Gastrocnemius medialis (tissue), 4 donors: ENCODE measurements at regions of chr4 and their contacts with region 1.

Region 1: DNA sequence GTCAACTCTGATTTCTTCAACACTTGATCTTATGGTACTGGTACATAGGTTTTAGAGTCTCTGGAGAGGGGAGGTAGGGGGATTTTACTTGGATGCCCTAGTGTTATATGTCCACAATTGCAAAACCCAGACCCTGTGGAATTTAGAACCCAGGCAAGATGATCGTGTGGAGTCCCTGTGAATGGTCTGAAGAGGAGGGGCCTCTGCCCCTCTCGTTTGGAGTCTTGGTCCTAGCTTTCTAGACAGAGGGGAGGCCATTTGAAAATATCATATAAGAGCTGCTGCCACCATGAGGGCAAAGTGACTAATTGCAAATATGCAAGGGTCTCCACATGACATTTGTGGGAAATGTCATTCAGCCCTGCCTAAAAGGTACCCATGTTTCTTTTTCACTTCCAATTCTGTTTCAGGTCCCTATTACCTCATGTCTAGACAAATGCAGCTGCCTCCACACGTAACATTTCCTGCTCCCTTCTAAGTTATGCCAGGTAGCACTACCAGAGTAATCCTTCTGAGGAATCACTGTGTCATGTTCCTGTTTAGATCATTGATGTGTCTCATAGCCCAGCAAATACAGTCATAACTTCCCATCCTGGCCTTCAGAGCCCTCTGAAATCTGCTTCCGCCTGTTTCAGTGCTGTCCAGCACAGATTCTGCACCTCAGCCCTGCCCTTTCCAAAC is 126.8 kb downstream of the KLHL8 start:
- DNase-seq: no peak
- ATAC-seq: peak; percentile 73 to 74
- H3K4me3 ChIP-seq: no peak overlapping the region
- H3K27ac ChIP-seq: peak overlapping the region; percentile 72 to 80 (median 78)
- H3K4me1 ChIP-seq: peaks cover 33 to 39% of the 10 kb centered on the region in 2 donors
- H3K27me3 ChIP-seq: no peaks in the 10 kb centered on the region
- CTCF ChIP-seq: peak; percentile 43 to 60 (median 58)
- POLR2A ChIP-seq: no peak

Region 2: GRCh38 chr4:86921608-86922252 is 171.9 kb before region 1 on chr4:
- in situ Hi-C with region 1: loop called (anchors 5 to 10 kb)
- intact Hi-C with region 1: loop called (anchors 1 kb)
- DNase-seq: no peak
- ATAC-seq: peak; percentile 45 to 71
- H3K4me3 ChIP-seq: no peak overlapping the region
- H3K27ac ChIP-seq: peak overlapping the region in 2 of 4 donors; percentile 11 to 12
- H3K4me1 ChIP-seq: peaks cover 11 to 23% of the 10 kb centered on the region in 2 donors
- H3K27me3 ChIP-seq: no peaks in the 10 kb centered on the region
- CTCF ChIP-seq: no peak
- POLR2A ChIP-seq: no peak

Region 3: GRCh38 chr4:86927843-86928395 is 165.7 kb before region 1 on chr4:
- in situ Hi-C with region 1: loop called (anchors 5 to 10 kb)
- intact Hi-C with region 1: no loop called
- DNase-seq: peak; percentile 84 to 86
- ATAC-seq: peak; percentile 95 to 96
- H3K4me3 ChIP-seq: no peak overlapping the region
- H3K27ac ChIP-seq: peak overlapping the region; percentile 86 to 92 (median 90)
- H3K4me1 ChIP-seq: peaks cover 16 to 20% of the 10 kb centered on the region in 2 donors
- H3K27me3 ChIP-seq: no peaks in the 10 kb centered on the region
- CTCF ChIP-seq: no peak
- POLR2A ChIP-seq: no peak

Region 4: DNA sequence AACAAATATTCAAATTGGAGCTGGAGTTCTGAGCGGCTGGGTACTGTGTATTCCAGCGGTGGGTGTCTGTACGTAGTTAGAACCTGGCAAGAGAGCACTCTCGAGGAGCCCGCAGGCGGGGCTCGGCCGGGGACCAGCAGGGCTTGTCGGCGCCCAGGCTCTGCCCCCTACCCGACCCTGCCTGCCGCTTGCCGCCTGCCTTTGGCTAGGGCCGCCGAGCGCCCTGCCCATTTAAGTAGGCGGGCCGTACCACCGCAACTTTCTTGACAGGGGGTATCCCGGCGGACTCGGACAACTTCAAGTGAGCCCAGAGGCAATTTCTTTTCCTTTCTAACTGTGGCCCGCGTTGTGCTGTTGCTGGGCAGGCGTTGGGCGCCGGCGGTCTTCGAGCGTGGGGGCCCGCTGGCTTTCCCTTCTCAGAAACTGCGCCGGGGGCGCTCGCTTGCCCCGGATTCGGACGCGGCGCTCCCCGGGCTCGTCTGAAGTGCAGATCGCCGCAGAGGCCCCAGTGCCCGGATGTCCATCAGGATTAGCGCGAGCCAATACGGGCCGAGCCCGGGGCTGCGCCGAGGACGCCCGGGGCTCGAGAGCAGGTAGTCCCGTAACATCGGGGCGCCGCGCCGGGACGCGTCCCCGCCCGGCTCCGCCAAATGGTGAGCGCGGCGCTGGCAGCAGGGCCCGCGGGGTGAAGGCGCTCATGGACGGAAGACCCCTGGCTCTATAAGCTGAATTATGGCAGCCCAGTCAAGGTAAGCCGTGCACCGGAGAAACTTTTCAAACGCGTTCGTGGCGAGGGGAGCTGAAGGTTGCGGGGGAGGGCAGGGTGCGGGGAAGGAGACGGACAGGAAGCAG is 86.7 kb before region 1 on chr4:
- in situ Hi-C with region 1: loop called in 2 of 4 experiments (anchors 5 to 10 kb)
- intact Hi-C with region 1: loop called (anchors 2 kb)
- DNase-seq: peak; percentile 93 to 94
- ATAC-seq: peak; percentile 79 to 83
- H3K4me3 ChIP-seq: peak overlapping the region; percentile 73 to 96 (median 84)
- H3K27ac ChIP-seq: peak overlapping the region; percentile 93 to 97 (median 96)
- H3K4me1 ChIP-seq: peaks cover 62 to 66% of the 10 kb centered on the region in 2 donors
- H3K27me3 ChIP-seq: no peaks in the 10 kb centered on the region
- CTCF ChIP-seq: peak in 4 of 5 experiments; percentile 34 to 42 (median 38)
- POLR2A ChIP-seq: peak; percentile 93 to 99

Region 5: GRCh38 chr4:87058356-87059073 is 35.1 kb before region 1 on chr4:
- in situ Hi-C with region 1: no loop called
- intact Hi-C with region 1: loop called (anchors 5 kb)
- DNase-seq: peak in 1 of 2 donors; percentile 46
- ATAC-seq: peak; percentile 49 to 63
- H3K4me3 ChIP-seq: no peak overlapping the region
- H3K27ac ChIP-seq: peak overlapping the region; percentile 79 to 92 (median 86)
- H3K4me1 ChIP-seq: peaks cover 93 to 96% of the 10 kb centered on the region in 2 donors
- H3K27me3 ChIP-seq: no peaks in the 10 kb centered on the region
- CTCF ChIP-seq: peak in 3 of 5 experiments; percentile 5 to 37 (median 9)
- POLR2A ChIP-seq: no peak